ENCODE measurements at regions of chr7 and their contacts with region 1.

Region 1: GRCh38 chr7:2720582-2721491 is 32.8 kb downstream of the AMZ1 start:
- DNase-seq: peak; percentile 63
- H3K4me3 Mint-ChIP-seq: peak overlapping the region; percentile 34
- H3K27ac Mint-ChIP-seq: peak overlapping the region; percentile 65
- H3K4me1 Mint-ChIP-seq: peaks cover 49% of the 10 kb centered on the region
- H3K27me3 Mint-ChIP-seq: no peaks in the 10 kb centered on the region

Region 2: GRCh38 chr7:2195400-2196246 is 525.2 kb before region 1 on chr7:
- intact Hi-C with region 1: no loop called
- DNase-seq: no peak
- H3K4me3 Mint-ChIP-seq: no peak overlapping the region
- H3K27ac Mint-ChIP-seq: no peak overlapping the region
- H3K4me1 Mint-ChIP-seq: no peaks in the 10 kb centered on the region
- H3K27me3 Mint-ChIP-seq: no peaks in the 10 kb centered on the region

Region 3: DNA sequence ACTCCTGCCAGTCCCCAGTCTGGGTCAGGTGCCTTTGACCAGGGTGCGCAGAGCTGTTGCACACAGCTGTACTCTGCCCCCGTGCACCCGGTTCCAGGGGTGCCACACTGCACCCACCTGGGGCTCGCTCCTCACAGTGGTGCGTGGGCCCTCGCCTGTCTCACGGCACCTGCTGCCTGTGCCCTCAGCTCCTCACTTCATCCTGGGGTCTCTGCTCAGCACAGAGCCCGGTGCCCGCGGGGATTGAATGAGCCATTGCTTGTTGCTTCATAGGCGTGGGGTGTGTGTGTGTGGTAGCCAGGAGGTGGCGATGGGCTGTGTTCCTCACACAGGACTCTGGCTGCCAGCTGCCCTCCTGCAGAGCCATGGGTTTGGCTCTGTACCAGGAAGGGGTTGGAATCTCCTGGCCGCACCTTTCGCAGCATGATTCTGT is 347.7 kb before region 1 on chr7:
- intact Hi-C with region 1: no loop called
- DNase-seq: no peak
- H3K4me3 Mint-ChIP-seq: no peak overlapping the region
- H3K27ac Mint-ChIP-seq: no peak overlapping the region
- H3K4me1 Mint-ChIP-seq: peaks cover 5% of the 10 kb centered on the region
- H3K27me3 Mint-ChIP-seq: no peaks in the 10 kb centered on the region

Region 4: DNA sequence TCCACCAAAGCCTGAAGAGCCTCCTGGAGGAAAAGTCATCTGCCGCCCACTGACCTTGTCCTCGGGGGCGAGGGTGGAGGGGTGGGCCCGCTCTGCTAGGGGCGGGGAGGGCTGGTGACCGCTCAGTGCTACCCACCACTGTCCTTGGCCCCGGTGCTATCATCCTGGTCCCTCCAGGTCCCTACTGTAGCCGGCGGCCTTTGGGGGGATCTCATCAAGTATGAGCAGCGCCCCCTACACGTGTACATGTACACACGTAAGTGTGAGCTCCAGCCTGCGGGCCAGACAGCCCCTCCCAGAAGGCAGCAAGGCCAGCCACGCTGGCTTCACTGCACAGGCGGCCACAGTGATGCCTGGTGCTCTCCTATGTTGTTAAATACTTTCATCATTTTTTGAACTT is 69.5 kb before region 1 on chr7:
- intact Hi-C with region 1: no loop called
- DNase-seq: no peak
- H3K4me3 Mint-ChIP-seq: no peak overlapping the region
- H3K27ac Mint-ChIP-seq: no peak overlapping the region
- H3K4me1 Mint-ChIP-seq: no peaks in the 10 kb centered on the region
- H3K27me3 Mint-ChIP-seq: no peaks in the 10 kb centered on the region

Region 5: DNA sequence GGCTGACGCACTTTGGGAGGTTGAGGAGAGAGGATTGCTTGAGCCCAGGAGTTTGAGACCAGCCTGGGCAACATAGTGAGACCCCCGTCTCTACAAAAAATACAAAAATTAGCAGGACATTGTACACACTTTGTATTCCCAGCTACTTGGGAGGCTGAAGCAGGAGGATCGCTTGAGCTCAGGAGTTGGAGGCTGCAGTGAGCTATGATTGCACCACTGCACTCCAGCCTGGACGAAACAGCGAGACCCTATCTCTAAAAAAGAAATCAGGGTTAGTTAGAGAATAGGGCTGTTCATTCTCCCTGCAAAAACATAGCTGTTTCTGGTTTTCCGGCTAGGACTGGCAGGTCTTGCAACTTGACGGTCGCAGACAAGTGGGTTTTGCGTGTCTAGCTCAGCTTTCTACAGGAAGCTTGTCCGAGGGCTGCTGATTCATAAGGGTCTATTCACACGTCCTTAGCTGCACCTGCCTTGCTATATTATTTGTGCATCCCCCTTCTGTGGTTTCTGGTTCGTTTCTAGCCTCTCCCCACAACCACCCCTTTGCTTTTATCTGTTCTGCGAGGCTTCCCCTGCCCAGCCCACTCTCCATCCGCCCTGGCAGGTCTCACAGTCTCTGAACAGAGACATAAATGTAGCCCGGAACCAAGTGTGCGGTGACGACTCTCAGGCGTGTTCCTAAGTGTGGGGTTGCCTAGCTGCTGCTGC is 22.1 kb before region 1 on chr7:
- intact Hi-C with region 1: no loop called
- DNase-seq: peak; percentile 68
- H3K4me3 Mint-ChIP-seq: peak overlapping the region; percentile 56
- H3K27ac Mint-ChIP-seq: peak overlapping the region; percentile 85
- H3K4me1 Mint-ChIP-seq: peaks cover 21% of the 10 kb centered on the region
- H3K27me3 Mint-ChIP-seq: peaks cover 17% of the 10 kb centered on the region

Region 6: DNA sequence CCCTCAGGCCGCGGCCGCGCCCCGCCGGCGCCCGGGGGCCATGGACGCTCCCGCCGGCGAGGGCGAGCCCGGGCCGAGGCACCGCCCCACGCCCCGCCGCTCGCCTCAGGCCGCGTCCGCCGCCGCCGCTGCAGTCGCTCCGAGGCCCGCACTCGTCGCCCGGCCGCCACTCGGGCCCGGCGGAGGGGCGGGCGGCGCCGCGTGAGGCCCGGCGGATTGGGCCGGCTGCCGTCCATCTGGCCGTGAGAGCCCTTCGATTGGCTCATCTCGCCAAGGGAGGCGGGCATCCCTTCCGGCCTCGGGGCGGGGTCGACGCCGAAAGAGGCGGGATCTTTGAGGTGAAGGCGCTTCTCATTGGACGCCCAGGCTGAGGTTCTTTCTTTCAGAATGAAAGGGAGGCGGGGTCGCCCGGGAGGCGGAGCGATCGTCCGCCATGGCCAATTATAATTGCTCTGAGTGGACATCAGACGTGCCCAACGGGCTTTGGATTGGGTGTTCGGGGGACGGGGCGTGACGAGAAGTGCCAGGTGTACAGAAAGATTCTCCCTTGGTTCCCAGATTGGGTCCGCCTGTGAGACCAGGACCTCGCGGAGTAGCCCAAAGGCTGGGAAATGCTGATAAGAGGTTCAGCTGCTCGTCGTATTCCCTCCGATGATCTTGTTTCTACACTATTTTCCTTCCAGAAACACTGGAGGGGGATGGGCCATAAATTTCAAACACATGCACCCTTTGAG is 123.5 kb after region 1 on chr7 and contains the start of gene GNA12:
- intact Hi-C with region 1: loop called (anchors 5 kb)
- DNase-seq: peak; percentile 99
- H3K4me3 Mint-ChIP-seq: peak within 1 kb of the TSS; percentile 90
- H3K27ac Mint-ChIP-seq: peak within 1 kb of the TSS; percentile 72
- H3K4me1 Mint-ChIP-seq: peaks cover 31% of the 10 kb centered on the region
- H3K27me3 Mint-ChIP-seq: no peaks in the 10 kb centered on the region
- total RNA-seq, gene GNA12: 36.3 and 36.4 TPM in 2 replicates

Measured in activated T-helper 1 cell treated with anti-CD3 and anti-CD28 coated beads, Interleukin-12 subunit alpha, Interleukin-12 subunit beta, Interleukin-2, Interleukin-4 antibody, amounts not matched to agents 30 ng/mL and 10 ng/mL and 1 ng/mL, durations not matched to agents 14 hours and 24 hours and 36 hours (primary cell).